Mammary epithelial cell (primary cell): ENCODE measurements at regions of chr2 and their contacts with region 1.

Region 1: GRCh38 chr2:232611551-232612218 is 21.7 kb upstream of the EFHD1 start:
- DNase-seq: peak; percentile 79
- H3K4me3 ChIP-seq: no peak overlapping the region
- H3K27ac ChIP-seq: no peak overlapping the region
- H3K4me1 ChIP-seq: peaks cover 16% of the 10 kb centered on the region
- H3K27me3 ChIP-seq: no peaks in the 10 kb centered on the region
- CTCF ChIP-seq: peak; percentile 88 to 89

Region 2: GRCh38 chr2:232588680-232589585 is 22.8 kb before region 1 on chr2:
- CTCF ChIA-PET with region 1: no interaction called
- dilution Hi-C with region 1: no loop called
- in situ Hi-C with region 1: no loop called
- intact Hi-C with region 1: loop called (anchors 1 kb)
- DNase-seq: peak; percentile 78
- H3K4me3 ChIP-seq: no peak overlapping the region
- H3K27ac ChIP-seq: peak overlapping the region; percentile 36
- H3K4me1 ChIP-seq: peaks cover 37% of the 10 kb centered on the region
- H3K27me3 ChIP-seq: no peaks in the 10 kb centered on the region
- CTCF ChIP-seq: no peak

Region 3: DNA sequence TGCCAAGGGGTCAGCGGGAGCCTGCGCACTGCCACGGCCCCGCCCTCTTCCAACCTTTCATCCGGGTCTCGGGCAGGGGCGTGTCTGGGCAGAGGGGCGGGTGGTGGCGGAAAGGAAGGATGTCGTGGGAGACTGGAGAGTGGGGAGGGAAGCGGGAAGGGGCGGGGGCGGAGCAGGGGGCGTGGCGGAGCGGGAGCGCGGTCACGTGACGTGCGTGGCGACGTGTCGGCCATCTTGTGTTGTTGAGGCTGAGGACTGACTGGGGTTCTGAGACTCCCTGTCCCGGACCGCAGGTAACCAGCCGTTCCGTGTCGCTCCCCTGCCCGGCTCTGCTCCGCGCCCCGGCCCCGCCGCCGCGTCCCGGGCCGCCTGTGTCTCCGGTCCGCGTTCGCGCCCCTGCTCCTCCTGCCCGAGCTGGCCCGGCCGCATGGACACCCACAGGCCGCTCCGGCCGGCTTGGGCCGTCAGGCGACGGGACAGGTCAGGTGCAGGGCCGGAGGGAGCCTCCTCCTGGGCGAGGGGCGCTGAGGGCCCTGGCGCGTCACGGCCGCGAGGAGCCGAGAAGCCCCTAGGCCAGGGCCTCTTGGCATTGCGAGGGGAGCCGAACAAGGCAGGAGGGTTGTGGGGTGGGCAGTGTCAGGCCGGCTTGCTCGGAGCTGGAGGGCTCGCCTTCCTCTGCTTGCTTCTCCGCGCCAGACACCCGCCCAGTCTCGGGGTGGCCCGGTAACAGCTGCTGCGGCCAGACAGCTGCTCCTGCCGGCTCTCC is 85.6 kb after region 1 on chr2 and contains the start of gene GIGYF2:
- CTCF ChIA-PET with region 1: no interaction called
- dilution Hi-C with region 1: no loop called
- in situ Hi-C with region 1: no loop called
- intact Hi-C with region 1: loop called (anchors 1 kb)
- DNase-seq: peak; percentile 99
- H3K4me3 ChIP-seq: peak within 1 kb of the TSS; percentile 64 to 99 (median 92)
- H3K27ac ChIP-seq: peak within 1 kb of the TSS; percentile 77
- H3K4me1 ChIP-seq: peaks cover 21% of the 10 kb centered on the region
- H3K27me3 ChIP-seq: no peaks in the 10 kb centered on the region
- CTCF ChIP-seq: no peak
- total RNA-seq, gene GIGYF2: 45.3 to 52.2 TPM

Region 4: GRCh38 chr2:232838406-232838874 is 226.8 kb after region 1 on chr2:
- CTCF ChIA-PET with region 1: interaction called, 3 read pairs
- dilution Hi-C with region 1: no loop called
- in situ Hi-C with region 1: no loop called
- intact Hi-C with region 1: loop called (anchors 5 kb)
- DNase-seq: peak; percentile 30
- H3K4me3 ChIP-seq: no peak overlapping the region
- H3K27ac ChIP-seq: no peak overlapping the region
- H3K4me1 ChIP-seq: peaks cover 10% of the 10 kb centered on the region
- H3K27me3 ChIP-seq: no peaks in the 10 kb centered on the region
- CTCF ChIP-seq: no peak

Region 5: GRCh38 chr2:233124421-233125080 is 512.9 kb after region 1 on chr2:
- CTCF ChIA-PET with region 1: no interaction called
- dilution Hi-C with region 1: no loop called
- in situ Hi-C with region 1: loop called in 1 of 2 experiments (anchors 25 kb)
- intact Hi-C with region 1: no loop called
- DNase-seq: no peak
- H3K4me3 ChIP-seq: no peak overlapping the region
- H3K27ac ChIP-seq: no peak overlapping the region
- H3K4me1 ChIP-seq: no peaks in the 10 kb centered on the region
- H3K27me3 ChIP-seq: no peaks in the 10 kb centered on the region
- CTCF ChIP-seq: no peak